ENCODE measurements at regions of chr14 and their contacts with region 1.

Region 1: DNA sequence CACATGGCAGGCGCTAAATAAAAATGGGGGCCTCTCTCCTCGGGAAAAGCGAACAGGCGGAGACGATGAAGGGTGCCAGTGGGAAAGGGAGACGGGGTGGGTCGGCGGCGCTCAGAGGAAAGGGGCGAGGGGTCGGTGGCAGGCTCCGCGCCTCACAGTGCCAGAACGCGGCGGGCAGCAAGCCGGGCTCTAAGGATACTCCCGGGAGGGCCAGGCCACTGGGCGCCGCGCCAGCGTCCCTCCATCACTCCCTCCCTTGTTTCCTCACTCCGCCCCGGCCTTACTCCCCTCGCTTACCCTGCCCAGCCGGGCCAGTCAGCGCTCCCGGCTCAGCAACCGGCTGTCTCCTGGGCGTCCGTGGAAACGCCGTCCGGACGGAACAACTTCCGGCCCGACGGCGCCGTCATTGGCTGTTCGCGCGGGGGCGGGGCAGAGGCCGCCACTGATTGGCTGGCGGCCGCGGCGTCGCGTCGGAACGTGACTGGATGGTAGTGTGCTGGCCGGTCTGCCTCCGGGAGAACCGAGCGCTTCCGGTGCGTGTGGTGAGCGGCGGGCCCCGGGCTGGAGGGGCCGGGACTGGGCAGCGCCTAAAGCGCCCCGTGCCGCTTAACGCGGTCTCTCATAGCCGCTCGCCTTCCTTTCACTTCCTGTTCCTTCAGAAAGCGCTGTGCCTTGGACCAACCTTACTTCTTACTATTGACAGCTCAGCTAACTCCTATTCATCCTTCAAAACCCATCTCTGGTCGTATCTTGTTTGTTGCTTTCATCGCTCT is 53.0 kb downstream of the SLC25A47 start:
- DNase-seq: peak; percentile 74
- ATAC-seq: peak; percentile 85
- H3K4me3 ChIP-seq: peak within 1 kb of the TSS; percentile 86
- H3K27ac ChIP-seq: peak within 1 kb of the TSS; percentile 98
- H3K4me1 ChIP-seq: peaks cover 29% of the 10 kb centered on the region
- H3K27me3 ChIP-seq: no peaks in the 10 kb centered on the region
- CTCF ChIP-seq: no peak
- EP300 ChIP-seq: no peak
- POLR2A ChIP-seq: peak; percentile 91
- RAD21 ChIP-seq: no peak

Region 2: GRCh38 chr14:100285021-100285912 is 90.9 kb before region 1 on chr14:
- CTCF ChIA-PET with region 1: interaction called, 50 read pairs
- POLR2A ChIA-PET with region 1: no interaction called
- RAD21 ChIA-PET with region 1: interaction called, 5 read pairs
- SMC1A ChIA-PET with region 1: interaction called, 11 read pairs
- in situ Hi-C with region 1: no loop called
- intact Hi-C with region 1: loop called (anchors 1 kb)
- DNase-seq: no peak
- ATAC-seq: peak; percentile 96
- H3K4me3 ChIP-seq: peak overlapping the region; percentile 84
- H3K27ac ChIP-seq: peak overlapping the region; percentile 63
- H3K4me1 ChIP-seq: no peaks in the 10 kb centered on the region
- H3K27me3 ChIP-seq: no peaks in the 10 kb centered on the region
- CTCF ChIP-seq: peak; percentile 62 to 93 (median 80)
- EP300 ChIP-seq: no peak
- POLR2A ChIP-seq: peak; percentile 86
- RAD21 ChIP-seq: peak; percentile 67

Region 3: GRCh38 chr14:100306420-100307219 is 69.5 kb before region 1 on chr14 and contains the start of gene SLC25A29:
- CTCF ChIA-PET with region 1: interaction called, 26 read pairs
- POLR2A ChIA-PET with region 1: interaction called, 5 read pairs
- RAD21 ChIA-PET with region 1: interaction called, 25 read pairs
- SMC1A ChIA-PET with region 1: interaction called, 25 read pairs
- in situ Hi-C with region 1: loop called (anchors 5 kb)
- intact Hi-C with region 1: loop called (anchors 1 kb)
- DNase-seq: no peak
- ATAC-seq: peak; percentile 96
- H3K4me3 ChIP-seq: peak within 1 kb of the TSS; percentile 85
- H3K27ac ChIP-seq: no peak within 1 kb of the TSS
- H3K4me1 ChIP-seq: no peaks in the 10 kb centered on the region
- H3K27me3 ChIP-seq: peaks cover 0 to 7% of the 10 kb centered on the region in 2 experiments; a peak in 1 of 4 replicates
- CTCF ChIP-seq: no peak
- EP300 ChIP-seq: no peak
- POLR2A ChIP-seq: peak; percentile 76
- RAD21 ChIP-seq: no peak
- polyA plus RNA-seq, gene SLC25A29: 0.42 TPM in 1 of 2 experiments, not detected in the other

Region 4: DNA sequence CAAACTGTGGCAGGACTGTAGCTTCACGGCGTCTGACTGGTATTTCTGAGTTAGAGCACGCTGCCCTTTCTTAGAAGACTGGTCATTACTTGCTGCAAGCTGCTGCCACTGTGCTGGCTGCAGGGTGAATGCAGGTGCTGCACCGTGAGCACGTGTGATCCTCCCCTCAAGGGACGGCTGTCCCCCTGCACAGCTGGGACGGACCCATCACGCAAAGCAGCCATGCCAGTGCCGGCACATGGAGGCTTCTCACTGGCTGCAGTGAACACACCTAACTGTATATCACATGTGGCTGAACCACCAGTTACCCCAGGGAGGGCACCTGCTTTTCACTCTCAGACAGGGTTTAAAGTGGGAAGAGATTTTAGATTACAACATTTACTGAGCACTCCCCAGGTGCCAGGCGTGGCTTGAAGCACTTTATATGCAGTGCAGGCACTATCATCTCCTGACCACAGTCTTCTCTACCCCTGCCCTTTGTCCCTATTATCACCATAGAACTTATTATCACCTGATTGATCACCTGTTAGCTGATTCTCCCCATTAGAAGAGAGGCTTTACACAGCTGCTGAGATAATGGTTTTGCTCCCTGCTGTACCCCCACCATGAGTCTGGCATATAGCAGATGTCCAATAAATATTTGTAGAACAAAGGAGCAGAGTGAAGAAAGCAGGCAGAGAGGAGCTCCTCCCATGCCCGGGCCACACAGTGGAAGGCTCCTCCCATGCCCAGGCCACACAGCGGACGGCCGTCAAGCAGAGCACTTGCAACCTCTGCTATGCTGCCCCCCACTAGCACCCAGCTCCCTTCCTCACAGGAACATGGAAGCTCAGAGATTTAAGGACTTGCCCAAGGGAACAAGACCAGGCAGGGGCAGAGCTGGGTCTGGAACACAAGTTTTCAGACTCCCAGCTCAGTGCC is 27.1 kb before region 1 on chr14:
- CTCF ChIA-PET with region 1: interaction called, 11 read pairs
- POLR2A ChIA-PET with region 1: interaction called, 3 read pairs
- RAD21 ChIA-PET with region 1: no interaction called
- SMC1A ChIA-PET with region 1: interaction called, 3 read pairs
- in situ Hi-C with region 1: no loop called
- intact Hi-C with region 1: loop called (anchors 5 kb)
- DNase-seq: no peak
- ATAC-seq: no peak
- H3K4me3 ChIP-seq: no peak overlapping the region
- H3K27ac ChIP-seq: no peak overlapping the region
- H3K4me1 ChIP-seq: no peaks in the 10 kb centered on the region
- H3K27me3 ChIP-seq: no peaks in the 10 kb centered on the region
- CTCF ChIP-seq: no peak
- EP300 ChIP-seq: no peak
- POLR2A ChIP-seq: peak; percentile 57
- RAD21 ChIP-seq: no peak

Region 5: DNA sequence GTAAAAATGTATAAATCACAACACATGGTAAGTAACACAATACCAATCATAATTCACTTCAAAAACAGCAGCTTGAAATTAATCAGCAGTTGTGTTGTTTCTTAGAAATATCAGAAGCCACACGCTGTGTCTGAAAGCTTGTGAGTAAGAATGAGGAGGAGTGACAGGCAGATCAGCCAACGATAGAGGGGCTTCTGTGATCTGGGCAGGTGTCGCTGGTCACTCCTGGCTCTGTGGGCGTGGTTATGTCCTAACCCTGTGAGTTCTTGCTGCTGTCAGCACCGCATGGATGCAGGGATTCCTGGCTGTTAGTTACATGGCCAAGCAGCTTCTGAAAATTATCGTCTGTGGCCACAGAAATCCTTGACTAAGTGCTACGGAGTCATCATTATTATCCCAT is 70.4 kb after region 1 on chr14:
- CTCF ChIA-PET with region 1: no interaction called
- POLR2A ChIA-PET with region 1: no interaction called
- RAD21 ChIA-PET with region 1: no interaction called
- SMC1A ChIA-PET with region 1: no interaction called
- in situ Hi-C with region 1: no loop called
- intact Hi-C with region 1: no loop called
- DNase-seq: no peak
- ATAC-seq: no peak
- H3K4me3 ChIP-seq: no peak overlapping the region
- H3K27ac ChIP-seq: no peak overlapping the region
- H3K4me1 ChIP-seq: no peaks in the 10 kb centered on the region
- H3K27me3 ChIP-seq: no peaks in the 10 kb centered on the region
- CTCF ChIP-seq: no peak
- EP300 ChIP-seq: no peak
- POLR2A ChIP-seq: no peak
- RAD21 ChIP-seq: no peak

Region 6: GRCh38 chr14:101135796-101136742 is 759.9 kb after region 1 on chr14:
- CTCF ChIA-PET with region 1: no interaction called
- POLR2A ChIA-PET with region 1: no interaction called
- RAD21 ChIA-PET with region 1: no interaction called
- SMC1A ChIA-PET with region 1: no interaction called
- in situ Hi-C with region 1: no loop called
- intact Hi-C with region 1: no loop called
- DNase-seq: no peak
- ATAC-seq: no peak
- H3K4me3 ChIP-seq: no peak overlapping the region
- H3K27ac ChIP-seq: no peak overlapping the region
- H3K4me1 ChIP-seq: no peaks in the 10 kb centered on the region
- H3K27me3 ChIP-seq: no peaks in the 10 kb centered on the region
- CTCF ChIP-seq: no peak
- EP300 ChIP-seq: no peak
- POLR2A ChIP-seq: no peak
- RAD21 ChIP-seq: no peak

Measured in GM12878 (cell line).